GM12878 (cell line): ENCODE measurements at regions of chr1 and their contacts with region 1.

Region 1: DNA sequence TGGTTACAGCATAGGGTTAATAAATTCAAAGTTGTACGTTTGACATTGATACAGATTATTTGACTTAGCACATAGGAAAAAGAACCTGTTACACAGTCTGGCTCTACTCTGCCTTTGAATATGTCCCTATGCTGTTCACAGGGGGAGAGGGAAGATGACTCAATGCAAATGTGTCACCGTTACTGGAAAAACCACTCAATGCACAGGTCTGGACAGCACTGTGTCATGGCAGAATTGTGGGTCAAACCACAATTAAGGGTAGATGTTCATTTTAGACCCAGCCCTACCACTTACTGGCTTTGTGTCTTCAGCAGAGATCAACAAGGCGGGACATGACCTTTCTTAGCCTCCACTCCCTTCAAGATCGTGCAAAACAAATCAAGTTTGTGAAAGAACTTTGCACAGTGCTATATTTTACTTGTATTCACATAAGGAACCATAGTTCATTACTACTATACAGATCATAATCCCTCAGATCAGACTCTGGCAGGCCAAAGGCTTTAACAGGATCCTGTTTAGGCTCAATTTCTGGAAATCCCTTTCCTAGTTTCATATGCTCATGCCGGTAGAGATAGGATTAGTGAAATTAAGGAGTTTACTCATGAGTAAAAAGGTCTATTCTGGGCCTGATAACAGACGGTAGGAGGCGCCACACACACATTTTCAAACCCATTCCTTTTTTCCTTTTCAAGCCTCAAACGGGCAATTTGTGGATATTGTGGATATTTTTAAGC is 22.1 kb downstream of the EIF2D start:
- DNase-seq: no peak
- ATAC-seq: peak; percentile 89
- H3K4me3 ChIP-seq: no peak overlapping the region
- H3K27ac ChIP-seq: peak overlapping the region; percentile 34
- H3K4me1 ChIP-seq: peaks cover 6% of the 10 kb centered on the region; the same call in 1 of the 2 replicates
- H3K27me3 ChIP-seq: no peaks in the 10 kb centered on the region
- CTCF ChIP-seq: peak; percentile 38 to 58 (median 42); a peak in 5 of 6 replicates
- EP300 ChIP-seq: no peak
- POLR2A ChIP-seq: peak; percentile 48; the same call in 1 of the 2 replicates
- RAD21 ChIP-seq: 0 out of 2 replicates have a peak, but pooled peaks have one; percentile 26

Region 2: GRCh38 chr1:206628916-206629315 is 38.7 kb after region 1 on chr1:
- CTCF ChIA-PET with region 1: interaction called, 13 read pairs
- POLR2A ChIA-PET with region 1: no interaction called
- RAD21 ChIA-PET with region 1: interaction called, 5 read pairs
- SMC1A ChIA-PET with region 1: no interaction called
- in situ Hi-C with region 1: no loop called
- intact Hi-C with region 1: no loop called
- DNase-seq: no peak
- ATAC-seq: no peak
- H3K4me3 ChIP-seq: no peak overlapping the region
- H3K27ac ChIP-seq: no peak overlapping the region
- H3K4me1 ChIP-seq: no peaks in the 10 kb centered on the region
- H3K27me3 ChIP-seq: no peaks in the 10 kb centered on the region
- CTCF ChIP-seq: no peak
- EP300 ChIP-seq: no peak
- POLR2A ChIP-seq: no peak
- RAD21 ChIP-seq: no peak